Endothelial cell of umbilical vein (primary cell): ENCODE measurements at regions of chr1 and their contacts with region 1.

Region 1: DNA sequence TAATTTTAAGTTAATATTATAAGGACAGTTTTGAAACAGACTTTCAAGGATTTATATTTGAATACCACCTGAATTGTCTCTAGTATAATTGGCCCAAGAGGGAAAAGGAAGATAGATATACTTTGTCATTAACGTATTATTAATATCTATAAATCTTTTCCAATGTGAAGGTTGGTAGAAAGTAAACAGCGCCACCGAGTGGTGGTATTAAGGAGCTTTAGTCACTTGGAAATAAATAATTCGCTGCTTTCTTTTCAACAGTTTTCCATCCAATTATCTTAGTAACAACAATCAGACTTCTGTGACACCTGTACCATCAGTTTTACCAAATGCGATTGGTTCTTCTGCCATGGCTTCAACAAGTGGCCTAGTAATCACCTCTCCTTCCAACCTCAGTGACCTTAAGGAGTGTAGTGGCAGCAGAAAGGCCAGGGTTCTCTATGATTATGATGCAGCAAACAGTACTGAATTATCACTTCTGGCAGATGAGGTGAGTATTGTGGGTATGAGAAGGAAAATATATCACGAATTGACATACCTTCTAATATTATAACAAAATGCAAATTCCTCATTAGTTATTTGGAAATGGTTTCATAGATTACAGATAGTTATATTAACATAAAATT is 37.7 kb downstream of the SH3GLB1 start:
- DNase-seq: peak; percentile 67
- H3K4me3 ChIP-seq: no peak overlapping the region
- H3K27ac ChIP-seq: no peak overlapping the region
- H3K4me1 ChIP-seq: peaks cover 6% of the 10 kb centered on the region
- H3K27me3 ChIP-seq: no peaks in the 10 kb centered on the region
- CTCF ChIP-seq: peak; percentile 43 to 46
- POLR2A ChIP-seq: no peak

Region 2: DNA sequence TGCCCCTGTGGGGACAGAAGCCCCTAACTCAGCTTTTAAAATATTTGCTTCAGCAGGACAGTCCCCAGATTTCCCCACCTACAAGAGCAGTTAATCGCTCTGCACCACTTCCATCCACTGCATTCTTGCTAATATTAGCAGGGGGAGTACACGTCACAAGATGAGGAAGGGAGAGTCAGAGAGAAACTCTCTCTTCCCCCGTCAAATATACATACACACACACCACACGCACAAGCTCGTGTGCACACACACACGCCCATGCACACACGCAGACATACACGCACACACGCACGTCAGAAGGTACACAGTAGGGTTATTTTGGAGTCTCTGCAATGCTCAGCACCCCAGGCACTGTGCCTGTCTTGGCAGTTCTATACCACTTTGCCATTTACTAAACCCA is 271.2 kb before region 1 on chr1:
- CTCF ChIA-PET with region 1: interaction called, 7 read pairs
- POLR2A ChIA-PET with region 1: no interaction called
- dilution Hi-C with region 1: no loop called
- intact Hi-C with region 1: loop called (anchors 2 kb)
- DNase-seq: no peak
- H3K4me3 ChIP-seq: no peak overlapping the region
- H3K27ac ChIP-seq: no peak overlapping the region
- H3K4me1 ChIP-seq: peaks cover 3% of the 10 kb centered on the region
- H3K27me3 ChIP-seq: peaks cover 2 to 3% of the 10 kb centered on the region in 2 experiments
- CTCF ChIP-seq: no peak
- POLR2A ChIP-seq: no peak

Region 3: GRCh38 chr1:86515597-86515996 is 226.5 kb before region 1 on chr1:
- CTCF ChIA-PET with region 1: interaction called, 10 read pairs
- POLR2A ChIA-PET with region 1: no interaction called
- dilution Hi-C with region 1: no loop called
- intact Hi-C with region 1: loop called (anchors 1 kb)
- DNase-seq: peak; percentile 67
- H3K4me3 ChIP-seq: no peak overlapping the region
- H3K27ac ChIP-seq: no peak overlapping the region
- H3K4me1 ChIP-seq: no peaks in the 10 kb centered on the region
- H3K27me3 ChIP-seq: no peaks in the 10 kb centered on the region
- CTCF ChIP-seq: peak; percentile 52 to 64
- POLR2A ChIP-seq: no peak

Region 4: GRCh38 chr1:86714159-86714558 is 27.9 kb before region 1 on chr1:
- CTCF ChIA-PET with region 1: interaction called, 14 read pairs
- POLR2A ChIA-PET with region 1: no interaction called
- dilution Hi-C with region 1: no loop called
- intact Hi-C with region 1: no loop called
- DNase-seq: no peak
- H3K4me3 ChIP-seq: no peak overlapping the region
- H3K27ac ChIP-seq: no peak overlapping the region
- H3K4me1 ChIP-seq: peaks cover 15% of the 10 kb centered on the region
- H3K27me3 ChIP-seq: no peaks in the 10 kb centered on the region
- CTCF ChIP-seq: no peak
- POLR2A ChIP-seq: no peak

Region 5: DNA sequence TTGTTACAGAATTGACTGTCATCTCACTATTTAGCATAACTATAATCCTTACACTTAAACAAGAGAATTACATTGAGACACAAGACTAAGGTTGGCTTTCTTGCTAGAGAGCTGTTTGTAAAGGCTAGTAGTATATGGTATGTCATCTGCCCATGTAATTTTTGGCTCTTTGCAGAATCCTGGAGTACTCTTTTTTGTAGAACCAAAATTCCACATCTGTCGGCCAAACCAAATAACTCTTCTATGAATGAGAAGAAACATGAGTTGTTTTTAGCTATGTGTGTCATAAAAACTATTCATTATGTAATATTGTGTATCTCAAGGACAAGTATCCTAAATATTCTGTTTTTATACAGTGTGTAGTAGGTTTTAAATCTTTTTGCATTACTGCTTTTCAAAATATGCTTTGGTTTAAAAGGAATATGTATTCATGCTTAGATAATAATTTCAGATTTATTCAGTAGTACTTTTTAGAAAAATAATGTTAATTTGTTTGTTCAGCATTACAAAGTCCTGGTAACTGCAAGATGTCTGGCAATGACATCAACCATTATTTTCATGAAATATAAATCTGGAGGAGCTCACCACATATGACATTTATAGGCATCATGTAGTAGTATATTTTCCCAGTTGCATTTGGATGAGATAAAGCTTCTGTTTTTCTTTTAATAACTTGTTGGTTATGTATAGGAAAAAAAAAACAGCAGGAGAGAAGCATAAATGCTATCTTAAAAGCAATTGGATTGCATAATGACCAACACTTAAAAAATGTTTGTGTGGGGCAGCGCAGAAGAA is 332.1 kb after region 1 on chr1:
- CTCF ChIA-PET with region 1: no interaction called
- POLR2A ChIA-PET with region 1: no interaction called
- dilution Hi-C with region 1: no loop called
- intact Hi-C with region 1: no loop called
- DNase-seq: no peak
- H3K4me3 ChIP-seq: no peak overlapping the region
- H3K27ac ChIP-seq: no peak overlapping the region
- H3K4me1 ChIP-seq: no peaks in the 10 kb centered on the region
- H3K27me3 ChIP-seq: no peaks in the 10 kb centered on the region
- CTCF ChIP-seq: no peak
- POLR2A ChIP-seq: no peak